Endothelial cell of umbilical vein (primary cell): ENCODE measurements at regions of chr11 and their contacts with region 1.

Region 1: GRCh38 chr11:68447015-68447801 is 13.3 kb upstream of the PPP6R3 start:
- DNase-seq: peak; percentile 58
- H3K4me3 ChIP-seq: no peak overlapping the region
- H3K27ac ChIP-seq: no peak overlapping the region
- H3K4me1 ChIP-seq: no peaks in the 10 kb centered on the region
- H3K27me3 ChIP-seq: no peaks in the 10 kb centered on the region
- CTCF ChIP-seq: peak; percentile 91
- POLR2A ChIP-seq: no peak

Region 2: GRCh38 chr11:68206187-68206601 is 241.0 kb before region 1 on chr11:
- CTCF ChIA-PET with region 1: interaction called, 4 read pairs
- POLR2A ChIA-PET with region 1: no interaction called
- dilution Hi-C with region 1: no loop called
- intact Hi-C with region 1: loop called (anchors 5 kb)
- DNase-seq: peak; percentile 70
- H3K4me3 ChIP-seq: no peak overlapping the region
- H3K27ac ChIP-seq: no peak overlapping the region
- H3K4me1 ChIP-seq: peaks cover 4% of the 10 kb centered on the region
- H3K27me3 ChIP-seq: no peaks in the 10 kb centered on the region
- CTCF ChIP-seq: peak; percentile 68 to 75
- POLR2A ChIP-seq: no peak

Region 3: DNA sequence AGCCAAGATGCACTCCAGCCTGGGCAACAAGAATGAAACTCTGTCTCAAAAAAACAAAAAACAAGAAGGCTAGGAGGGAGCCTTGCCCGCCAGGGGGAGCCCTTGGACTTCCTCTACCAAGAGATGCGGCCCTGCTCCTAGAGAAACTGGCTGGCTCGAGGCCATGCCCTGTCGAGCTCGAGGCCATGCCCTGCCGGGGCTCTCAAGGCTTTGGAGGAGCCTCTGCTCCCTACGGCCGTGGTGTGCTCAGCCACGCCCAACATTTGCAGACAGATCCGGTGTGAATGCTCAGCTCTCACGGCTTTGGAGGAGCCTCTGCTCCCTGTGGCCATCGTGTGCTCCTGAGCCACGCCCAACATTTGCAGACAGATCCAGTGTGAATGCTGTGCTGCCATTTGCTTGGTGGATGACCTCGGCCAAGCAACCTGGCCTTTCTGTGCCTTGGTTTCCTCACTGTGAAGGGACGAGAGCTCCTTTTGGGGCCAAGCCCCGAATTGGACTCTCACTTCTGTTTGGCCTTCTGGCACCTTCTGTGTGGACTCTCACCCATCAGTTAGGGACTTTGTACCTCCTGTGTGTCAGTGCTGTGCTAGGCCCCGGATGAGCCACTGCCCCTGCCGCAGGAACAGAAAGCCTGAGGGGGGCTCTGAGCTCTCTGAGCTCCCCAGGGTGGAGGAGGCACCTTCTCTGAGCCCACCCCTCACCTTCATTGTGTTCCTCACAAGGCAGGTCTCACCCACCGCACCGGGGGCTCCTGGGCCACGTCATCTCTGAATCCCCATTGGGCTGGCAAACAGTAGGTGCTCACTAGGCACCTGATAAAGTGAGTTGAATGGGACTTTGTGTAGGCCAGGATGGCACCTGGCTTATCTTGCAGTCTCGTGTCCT is 189.5 kb before region 1 on chr11:
- CTCF ChIA-PET with region 1: interaction called, 9 read pairs
- POLR2A ChIA-PET with region 1: no interaction called
- dilution Hi-C with region 1: no loop called
- intact Hi-C with region 1: loop called (anchors 1 kb)
- DNase-seq: peak; percentile 78
- H3K4me3 ChIP-seq: no peak overlapping the region
- H3K27ac ChIP-seq: no peak overlapping the region
- H3K4me1 ChIP-seq: peaks cover 2% of the 10 kb centered on the region
- H3K27me3 ChIP-seq: no peaks in the 10 kb centered on the region
- CTCF ChIP-seq: peak; percentile 69 to 87
- POLR2A ChIP-seq: no peak

Region 4: GRCh38 chr11:68271781-68272608 is 175.2 kb before region 1 on chr11 and contains the start of gene C11orf24:
- CTCF ChIA-PET with region 1: interaction called, 3 read pairs
- POLR2A ChIA-PET with region 1: no interaction called
- dilution Hi-C with region 1: no loop called
- intact Hi-C with region 1: loop called (anchors 1 kb)
- DNase-seq: peak; percentile 90
- H3K4me3 ChIP-seq: peak within 1 kb of the TSS; percentile 59 to 68 (median 60)
- H3K27ac ChIP-seq: peak within 1 kb of the TSS; percentile 71
- H3K4me1 ChIP-seq: peaks cover 7% of the 10 kb centered on the region
- H3K27me3 ChIP-seq: no peaks in the 10 kb centered on the region
- CTCF ChIP-seq: no peak
- POLR2A ChIP-seq: peak; percentile 77
- total RNA-seq, gene C11orf24: 26.4 and 28.4 TPM in 2 replicates

Region 5: DNA sequence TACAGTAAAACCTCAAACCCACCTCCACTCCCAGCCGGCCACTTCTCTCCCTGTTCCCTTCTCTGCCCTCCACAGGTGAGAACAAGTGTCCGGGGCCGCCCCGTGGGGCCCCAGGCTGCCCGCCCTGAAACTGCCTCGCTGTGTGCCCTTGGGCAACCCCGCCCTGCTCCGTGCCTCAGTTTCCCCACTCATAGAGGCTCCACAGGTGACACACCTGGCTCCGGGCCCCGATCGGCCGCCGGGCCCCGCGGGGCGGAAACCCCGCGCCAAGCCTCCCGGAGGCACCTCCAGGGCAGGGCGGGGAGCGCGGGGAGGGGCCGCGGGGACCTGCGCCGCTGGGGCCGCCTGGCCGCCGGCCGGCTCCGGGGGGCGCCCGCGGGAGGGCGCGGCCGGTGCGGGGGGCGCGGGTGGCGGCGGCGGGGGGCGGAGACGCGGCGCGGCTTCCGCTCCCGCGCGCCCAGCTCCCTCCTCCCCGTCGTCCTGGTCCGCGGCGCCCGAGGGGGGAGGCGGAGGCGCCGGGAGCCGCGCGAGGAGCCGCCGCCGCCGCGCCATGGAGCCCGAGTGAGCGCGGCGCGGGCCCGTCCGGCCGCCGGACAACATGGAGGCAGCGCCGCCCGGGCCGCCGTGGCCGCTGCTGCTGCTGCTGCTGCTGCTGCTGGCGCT is 135.0 kb before region 1 on chr11 and contains the start of gene LRP5:
- CTCF ChIA-PET with region 1: no interaction called
- POLR2A ChIA-PET with region 1: no interaction called
- dilution Hi-C with region 1: no loop called
- intact Hi-C with region 1: loop called (anchors 5 kb)
- DNase-seq: no peak
- H3K4me3 ChIP-seq: peak within 1 kb of the TSS; percentile 33 to 88 (median 78)
- H3K27ac ChIP-seq: peak within 1 kb of the TSS; percentile 69
- H3K4me1 ChIP-seq: peaks cover 25% of the 10 kb centered on the region
- H3K27me3 ChIP-seq: no peaks in the 10 kb centered on the region
- CTCF ChIP-seq: no peak
- POLR2A ChIP-seq: no peak
- total RNA-seq, gene LRP5: 44.3 and 51.8 TPM in 2 replicates

Region 6: GRCh38 chr11:68398995-68399851 is 48.0 kb before region 1 on chr11:
- CTCF ChIA-PET with region 1: no interaction called
- POLR2A ChIA-PET with region 1: no interaction called
- dilution Hi-C with region 1: no loop called
- intact Hi-C with region 1: loop called (anchors 1 kb)
- DNase-seq: no peak
- H3K4me3 ChIP-seq: no peak overlapping the region
- H3K27ac ChIP-seq: no peak overlapping the region
- H3K4me1 ChIP-seq: no peaks in the 10 kb centered on the region
- H3K27me3 ChIP-seq: no peaks in the 10 kb centered on the region
- CTCF ChIP-seq: no peak
- POLR2A ChIP-seq: no peak

Region 7: GRCh38 chr11:68430801-68431200 is 16.4 kb before region 1 on chr11:
- CTCF ChIA-PET with region 1: no interaction called
- POLR2A ChIA-PET with region 1: no interaction called
- dilution Hi-C with region 1: no loop called
- intact Hi-C with region 1: no loop called
- DNase-seq: no peak
- H3K4me3 ChIP-seq: no peak overlapping the region
- H3K27ac ChIP-seq: no peak overlapping the region
- H3K4me1 ChIP-seq: no peaks in the 10 kb centered on the region
- H3K27me3 ChIP-seq: no peaks in the 10 kb centered on the region
- CTCF ChIP-seq: no peak
- POLR2A ChIP-seq: no peak